Naive thymus-derived CD4-positive, alpha-beta T cell (primary cell): ENCODE measurements at regions of chr17 and their contacts with region 1.

Region 1: DNA sequence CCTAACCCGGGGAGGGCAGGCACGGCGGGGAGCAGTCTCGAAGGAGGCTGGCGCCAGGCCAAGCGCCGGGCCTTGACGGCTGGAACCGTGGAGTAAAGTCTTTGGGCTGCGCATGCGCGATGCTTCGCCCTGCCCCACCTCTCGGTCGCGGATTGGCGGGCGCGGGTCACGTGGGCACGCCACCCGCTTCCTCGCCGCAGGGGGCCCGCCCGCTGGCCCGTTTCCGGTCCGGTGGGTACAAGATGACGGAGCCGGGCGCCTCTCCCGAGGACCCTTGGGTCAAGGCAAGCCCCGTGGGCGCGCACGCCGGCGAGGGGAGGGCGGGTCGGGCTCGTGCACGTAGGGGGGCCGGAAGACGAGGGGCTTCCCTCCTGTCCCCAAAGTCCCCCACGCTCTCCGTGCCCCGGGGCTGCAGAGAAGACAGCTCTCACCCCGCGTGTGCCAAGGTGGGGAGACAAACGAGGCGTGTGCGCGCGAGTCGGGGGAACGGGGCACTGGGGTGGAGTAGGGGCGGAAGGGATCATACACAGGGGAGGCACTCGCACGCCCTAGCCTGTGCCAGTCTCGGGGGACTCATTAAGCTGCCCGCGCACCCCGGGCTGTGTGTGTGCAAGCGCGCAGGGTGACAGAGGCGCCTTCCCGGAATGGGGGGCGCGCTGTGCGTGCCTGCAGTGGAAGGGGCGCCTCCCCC is at the start of gene MLX:
- DNase-seq: peak; percentile 86 to 96 (median 90)
- ATAC-seq: peak; percentile 80
- H3K4me3 ChIP-seq: peak within 1 kb of the TSS; percentile 76
- H3K4me3 Mint-ChIP-seq: peak within 1 kb of the TSS; percentile 80 to 98 (median 95)
- H3K27ac ChIP-seq: peak within 1 kb of the TSS; percentile 92
- H3K27ac Mint-ChIP-seq: peak within 1 kb of the TSS; percentile 87 to 98 (median 95)
- H3K4me1 ChIP-seq: peaks cover 26 to 27% of the 10 kb centered on the region in 2 donors
- H3K4me1 Mint-ChIP-seq: peaks cover 26 to 57% (median 45%) of the 10 kb centered on the region in 7 donors
- H3K27me3 ChIP-seq: no peaks in the 10 kb centered on the region
- H3K27me3 Mint-ChIP-seq: no peaks in the 10 kb centered on the region
- total RNA-seq, gene MLX: 35.3 to 73.9 (median 65.1) TPM

Region 2: GRCh38 chr17:42287926-42288802 is 278.9 kb before region 1 on chr17 and contains the start of gene STAT5A:
- CTCF ChIA-PET with region 1: no interaction called
- POLR2A ChIA-PET with region 1: no interaction called
- intact Hi-C with region 1: no loop called
- DNase-seq: peak; percentile 58 to 83 (median 79)
- ATAC-seq: peak; percentile 90
- H3K4me3 ChIP-seq: peak within 1 kb of the TSS; percentile 88
- H3K4me3 Mint-ChIP-seq: peak within 1 kb of the TSS; percentile 87 to 97 (median 93)
- H3K27ac ChIP-seq: peak within 1 kb of the TSS; percentile 93
- H3K27ac Mint-ChIP-seq: peak within 1 kb of the TSS; percentile 93 to 99 (median 96)
- H3K4me1 ChIP-seq: peaks cover 18 to 24% of the 10 kb centered on the region in 2 donors
- H3K4me1 Mint-ChIP-seq: peaks cover 27 to 65% (median 54%) of the 10 kb centered on the region in 7 donors
- H3K27me3 ChIP-seq: no peaks in the 10 kb centered on the region
- H3K27me3 Mint-ChIP-seq: no peaks in the 10 kb centered on the region
- total RNA-seq, gene STAT5A: 111 to 162 (median 150) TPM

Region 3: DNA sequence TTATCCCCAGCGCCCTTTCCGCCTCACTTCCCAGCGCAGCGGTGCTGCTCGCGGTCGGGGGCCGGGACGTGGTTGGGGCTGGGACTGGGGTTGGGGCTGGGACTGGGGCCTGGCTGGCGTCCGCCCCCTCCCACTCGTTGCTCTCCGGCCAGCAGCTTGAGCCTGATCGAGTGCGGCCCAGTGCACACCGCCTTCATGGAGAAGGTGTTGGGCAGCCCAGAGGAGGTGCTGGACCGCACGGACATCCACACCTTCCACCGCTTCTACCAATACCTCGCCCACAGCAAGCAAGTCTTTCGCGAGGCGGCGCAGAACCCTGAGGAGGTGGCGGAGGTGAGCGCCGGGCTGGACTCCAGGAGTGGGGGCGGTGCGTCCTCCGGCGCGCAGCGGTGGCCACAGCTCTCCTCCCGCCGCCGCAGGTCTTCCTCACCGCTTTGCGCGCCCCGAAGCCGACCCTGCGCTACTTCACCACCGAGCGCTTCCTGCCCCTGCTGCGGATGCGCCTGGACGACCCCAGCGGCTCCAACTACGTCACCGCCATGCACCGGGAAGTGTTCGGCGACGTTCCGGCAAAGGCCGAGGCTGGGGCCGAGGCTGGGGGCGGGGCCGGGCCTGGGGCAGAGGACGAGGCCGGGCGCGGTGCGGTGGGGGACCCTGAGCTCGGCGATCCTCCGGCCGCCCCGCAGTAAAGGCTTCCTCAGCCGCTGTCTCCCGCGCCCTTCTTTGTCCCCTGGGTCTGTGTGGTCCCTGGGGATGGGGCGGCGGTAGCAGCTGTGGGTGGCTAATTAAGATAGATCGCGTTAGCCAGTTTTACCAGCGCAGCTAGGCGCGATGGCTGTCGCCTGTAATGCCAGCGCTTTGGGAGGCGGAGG is 12.5 kb before region 1 on chr17:
- CTCF ChIA-PET with region 1: interaction called, 3 read pairs
- POLR2A ChIA-PET with region 1: interaction called, 26 read pairs
- intact Hi-C with region 1: loop called in 1 of 2 experiments (anchors 1 kb)
- DNase-seq: peak; percentile 47 to 84 (median 68)
- ATAC-seq: peak; percentile 90
- H3K4me3 ChIP-seq: peak overlapping the region; percentile 80
- H3K4me3 Mint-ChIP-seq: peak overlapping the region; percentile 84 to 95 (median 90)
- H3K27ac ChIP-seq: peak overlapping the region; percentile 86
- H3K27ac Mint-ChIP-seq: peak overlapping the region; percentile 80 to 94 (median 91)
- H3K4me1 ChIP-seq: peaks cover 14 to 15% of the 10 kb centered on the region in 2 donors
- H3K4me1 Mint-ChIP-seq: peaks cover 8 to 44% (median 25%) of the 10 kb centered on the region in 7 donors
- H3K27me3 ChIP-seq: no peaks in the 10 kb centered on the region
- H3K27me3 Mint-ChIP-seq: no peaks in the 10 kb centered on the region

Region 4: GRCh38 chr17:42720996-42721583 is 154.1 kb after region 1 on chr17:
- CTCF ChIA-PET with region 1: no interaction called
- POLR2A ChIA-PET with region 1: no interaction called
- intact Hi-C with region 1: no loop called
- DNase-seq: peak in 7 of 9 donors; percentile 43 to 74 (median 62)
- ATAC-seq: peak; percentile 87
- H3K4me3 ChIP-seq: no peak overlapping the region
- H3K4me3 Mint-ChIP-seq: no peak overlapping the region
- H3K27ac ChIP-seq: no peak overlapping the region
- H3K27ac Mint-ChIP-seq: no peak overlapping the region
- H3K4me1 ChIP-seq: no peaks in the 10 kb centered on the region
- H3K4me1 Mint-ChIP-seq: peaks cover 0 to 5% (median 4%) of the 10 kb centered on the region in 7 donors
- H3K27me3 ChIP-seq: no peaks in the 10 kb centered on the region
- H3K27me3 Mint-ChIP-seq: no peaks in the 10 kb centered on the region